ENCODE measurements at regions of chr11 and their contacts with region 1.

Region 1: DNA sequence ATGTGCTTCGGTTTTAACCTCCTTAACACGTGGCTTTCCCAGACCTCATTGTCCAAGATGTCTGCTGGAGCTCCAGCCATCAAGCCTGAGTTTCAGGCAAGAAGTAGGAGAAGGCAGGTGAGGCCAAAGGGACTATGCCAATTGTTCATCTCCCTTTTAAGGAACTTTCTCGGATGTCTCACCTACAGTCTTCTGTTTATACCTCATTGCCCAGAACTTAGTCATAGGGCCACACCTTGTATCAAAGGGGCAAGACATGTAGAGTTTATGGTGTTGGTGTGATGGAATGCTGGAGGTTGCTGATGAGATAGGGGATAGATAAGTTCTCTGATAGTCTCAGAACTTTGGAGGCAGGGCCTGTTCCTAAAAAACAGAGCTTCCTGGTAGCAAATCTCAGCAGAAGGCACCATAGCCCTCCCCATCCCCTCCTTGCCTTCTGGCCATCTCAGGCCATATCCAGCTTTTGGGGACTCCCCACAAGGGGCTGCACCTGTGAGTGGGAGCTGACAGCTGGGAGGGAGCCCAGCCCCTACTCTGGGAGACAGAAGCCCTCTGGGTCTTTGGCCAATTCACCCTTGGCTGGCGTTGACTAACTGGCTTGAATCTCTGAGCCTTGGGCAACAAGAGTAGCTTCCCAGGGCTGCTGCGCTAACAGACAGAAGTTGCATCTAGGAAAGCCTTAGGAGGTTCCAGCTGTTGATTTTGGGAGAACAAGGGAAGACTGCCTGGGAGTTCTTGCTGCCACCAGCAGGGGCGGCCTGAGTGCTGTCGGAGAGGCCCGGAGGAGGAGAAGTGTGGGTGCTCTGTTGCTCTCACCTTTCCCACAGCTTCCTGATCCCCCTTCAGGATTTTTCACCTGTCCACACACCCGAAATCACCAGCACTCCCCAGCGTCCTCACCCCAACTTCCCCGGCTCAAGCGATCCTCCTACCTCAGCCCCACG is 149.8 kb upstream of the THY1 start:
- DNase-seq: peak; percentile 36
- ATAC-seq: peak; percentile 68
- H3K4me3 Mint-ChIP-seq: no peak overlapping the region
- H3K27ac Mint-ChIP-seq: no peak overlapping the region
- H3K4me1 Mint-ChIP-seq: peaks cover 10% of the 10 kb centered on the region
- H3K27me3 Mint-ChIP-seq: peaks cover 6% of the 10 kb centered on the region
- CTCF ChIP-seq: no peak

Region 2: DNA sequence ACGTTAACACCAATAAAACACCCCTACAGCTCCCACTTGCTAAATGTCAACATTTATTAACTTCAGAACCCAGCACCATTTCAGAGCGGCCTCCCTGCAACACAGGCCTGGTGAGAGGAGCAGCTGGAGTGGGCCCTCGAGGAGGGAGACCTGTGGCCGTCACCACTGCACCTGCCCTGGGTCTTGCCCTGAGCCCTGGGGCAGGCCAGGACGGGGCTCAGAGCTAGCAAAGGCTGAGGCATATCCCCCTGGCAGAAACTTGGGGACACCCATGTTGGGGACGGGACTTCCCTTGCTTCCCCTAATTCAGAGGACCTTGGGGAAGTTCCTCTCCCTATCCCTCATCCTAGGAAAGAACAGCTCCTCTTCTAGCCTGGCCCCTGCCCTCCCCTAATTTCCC is 12.5 kb before region 1 on chr11:
- CTCF ChIA-PET with region 1: interaction called, 10 read pairs
- POLR2A ChIA-PET with region 1: no interaction called
- DNase-seq: no peak
- ATAC-seq: no peak
- H3K4me3 Mint-ChIP-seq: no peak overlapping the region
- H3K27ac Mint-ChIP-seq: no peak overlapping the region
- H3K4me1 Mint-ChIP-seq: no peaks in the 10 kb centered on the region
- H3K27me3 Mint-ChIP-seq: peaks cover 27% of the 10 kb centered on the region
- CTCF ChIP-seq: no peak

Region 3: GRCh38 chr11:119584193-119585037 is 11.7 kb after region 1 on chr11:
- CTCF ChIA-PET with region 1: interaction called, 71 read pairs
- POLR2A ChIA-PET with region 1: interaction called, 3 read pairs
- DNase-seq: peak; percentile 83
- ATAC-seq: peak; percentile 81
- H3K4me3 Mint-ChIP-seq: peak overlapping the region; percentile 75
- H3K27ac Mint-ChIP-seq: no peak overlapping the region
- H3K4me1 Mint-ChIP-seq: peaks cover 16% of the 10 kb centered on the region
- H3K27me3 Mint-ChIP-seq: peaks cover 44% of the 10 kb centered on the region
- CTCF ChIP-seq: no peak

Region 4: GRCh38 chr11:119615003-119615881 is 42.5 kb after region 1 on chr11:
- CTCF ChIA-PET with region 1: interaction called, 11 read pairs
- POLR2A ChIA-PET with region 1: no interaction called
- DNase-seq: no peak
- ATAC-seq: no peak
- H3K4me3 Mint-ChIP-seq: no peak overlapping the region
- H3K27ac Mint-ChIP-seq: no peak overlapping the region
- H3K4me1 Mint-ChIP-seq: peaks cover 44% of the 10 kb centered on the region
- H3K27me3 Mint-ChIP-seq: peaks cover 28% of the 10 kb centered on the region
- CTCF ChIP-seq: no peak

Measured in WTC11 (cell line).